ENCODE measurements at regions of chr12 and their contacts with region 1.

Region 1: DNA sequence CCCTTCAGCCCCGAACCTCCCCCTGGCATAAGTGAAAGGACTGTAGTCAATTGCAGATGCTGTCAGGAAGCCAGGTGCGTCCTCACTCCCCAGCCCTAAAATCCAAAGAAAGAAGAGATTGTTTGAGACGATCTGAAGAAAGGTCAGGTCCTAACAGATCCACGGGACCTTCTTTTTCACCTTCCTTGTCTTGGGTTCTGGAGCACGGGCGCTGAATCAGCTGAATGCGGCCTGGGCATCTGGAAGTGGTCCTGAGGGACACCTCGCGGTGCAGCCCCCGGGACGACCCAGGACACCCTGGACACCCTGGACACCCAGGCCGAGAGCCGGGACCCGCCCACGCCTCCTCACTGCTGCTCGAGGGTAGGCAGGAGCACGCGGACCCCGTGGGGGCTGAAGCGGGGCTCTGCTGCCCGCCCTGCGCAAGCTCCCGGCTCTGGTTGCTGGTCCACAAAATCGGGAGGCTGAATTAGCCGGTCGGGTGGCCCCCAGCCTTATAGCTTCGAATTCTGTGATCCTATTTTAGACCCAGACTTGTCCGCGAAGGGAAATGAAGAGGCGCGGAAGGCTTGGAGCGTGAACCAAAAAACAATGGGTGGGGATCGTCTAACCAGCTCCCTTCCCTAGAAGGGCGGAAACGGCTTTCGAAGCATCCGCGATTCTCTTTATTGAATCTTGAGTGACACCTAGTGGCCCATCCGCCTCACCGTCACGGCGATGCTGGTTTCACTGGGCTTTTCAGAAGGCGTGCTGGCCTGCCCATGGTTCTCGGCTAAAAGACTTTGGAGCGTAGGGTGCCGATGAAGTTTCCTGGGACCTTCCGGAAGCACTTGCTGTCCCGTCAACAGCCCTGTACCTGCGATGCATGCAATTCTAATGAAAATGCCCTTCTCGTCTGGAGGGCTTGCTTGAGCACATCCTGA is 46.4 kb upstream of the PLXNC1 start:
- DNase-seq: peak; percentile 96
- ATAC-seq: peak; percentile 33
- H3K4me3 ChIP-seq: peak overlapping the region; percentile 75
- H3K27ac ChIP-seq: peak overlapping the region; percentile 18; the same call in 1 of the 2 replicates
- H3K4me1 ChIP-seq: peaks cover 59% of the 10 kb centered on the region
- H3K27me3 ChIP-seq: no peaks in the 10 kb centered on the region
- CTCF ChIP-seq: peak; percentile 79

Region 2: DNA sequence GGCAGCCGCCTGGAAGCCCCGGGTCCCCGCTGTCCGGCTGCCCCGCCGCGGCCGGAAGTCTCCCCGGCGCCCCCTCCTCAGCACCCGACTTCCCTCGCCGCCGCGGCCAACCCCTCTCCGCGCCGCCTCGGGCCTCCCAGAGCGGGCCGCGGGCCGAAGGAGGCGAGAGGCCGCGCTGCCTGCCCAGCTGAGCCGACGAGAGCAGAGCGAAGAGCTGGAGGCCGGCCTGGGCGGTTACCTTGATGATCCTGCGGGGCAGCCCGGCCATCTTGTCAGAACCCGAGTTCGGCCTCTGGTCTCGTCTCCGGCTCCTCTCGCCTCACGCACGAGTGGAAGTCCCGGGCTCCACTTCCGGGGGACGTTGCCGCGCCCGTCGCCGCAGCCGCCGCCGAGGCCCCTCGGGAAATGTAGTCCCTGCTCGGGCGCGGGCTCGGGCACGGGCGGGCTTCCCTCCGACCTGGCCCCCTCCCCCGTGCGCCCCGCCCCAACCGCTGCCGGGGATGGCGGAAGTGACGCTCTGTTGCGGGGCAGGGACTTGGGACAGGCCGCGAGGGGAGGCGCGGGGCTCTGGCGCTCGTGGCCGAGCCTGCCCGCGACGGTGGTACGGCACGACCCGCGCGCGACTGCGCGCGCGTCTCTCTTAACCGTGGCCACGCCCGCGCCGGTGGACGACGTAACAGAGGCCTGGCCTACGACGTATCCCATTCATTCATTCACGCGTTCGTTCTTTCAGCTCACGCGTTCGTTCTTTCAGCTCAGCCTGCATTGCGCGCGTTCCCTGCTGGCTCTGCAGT is 660.2 kb before region 1 on chr12 and contains the start of gene UBE2N:
- CTCF ChIA-PET with region 1: no interaction called
- POLR2A ChIA-PET with region 1: no interaction called
- intact Hi-C with region 1: loop called (anchors 10 kb)
- DNase-seq: peak; percentile 94
- ATAC-seq: peak; percentile 85
- H3K4me3 ChIP-seq: peak within 1 kb of the TSS; percentile 86
- H3K27ac ChIP-seq: peak within 1 kb of the TSS; percentile 68
- H3K4me1 ChIP-seq: peaks cover 27% of the 10 kb centered on the region
- H3K27me3 ChIP-seq: no peaks in the 10 kb centered on the region
- CTCF ChIP-seq: no peak
- total RNA-seq, gene UBE2N: 128 and 205 TPM in 2 replicates

Region 3: DNA sequence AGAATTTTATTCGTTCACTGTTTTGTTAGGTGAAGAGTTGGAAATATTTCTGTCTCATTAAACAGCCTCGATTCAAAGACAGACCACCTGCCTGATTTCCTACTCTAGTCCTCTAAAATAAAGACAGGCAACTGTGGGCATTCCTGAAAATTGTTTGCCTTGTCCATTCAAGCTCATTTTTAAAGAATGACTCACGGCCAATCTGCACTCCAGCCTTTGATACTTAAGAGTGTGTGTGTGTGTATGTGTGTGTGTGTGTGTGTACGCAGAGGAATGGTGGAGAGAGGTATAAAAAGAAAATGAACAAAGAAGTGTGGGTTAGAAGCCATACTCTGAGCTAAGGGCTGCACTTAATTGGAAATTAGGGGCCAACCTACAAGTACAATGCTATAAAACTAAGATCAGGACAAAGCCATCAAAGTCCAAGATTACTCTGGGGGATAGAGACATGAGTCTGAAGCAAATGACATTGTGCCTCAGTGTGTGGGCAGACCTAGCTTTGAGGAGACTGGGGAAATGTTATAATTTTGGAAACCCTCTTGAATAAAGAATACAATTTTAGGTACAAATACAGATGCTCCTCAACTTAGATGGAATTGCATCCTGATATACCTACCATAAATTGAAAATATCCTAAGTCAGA is 575.1 kb before region 1 on chr12:
- CTCF ChIA-PET with region 1: no interaction called
- POLR2A ChIA-PET with region 1: interaction called, 11 read pairs
- intact Hi-C with region 1: no loop called
- DNase-seq: peak; percentile 95
- ATAC-seq: peak; percentile 92
- H3K4me3 ChIP-seq: no peak overlapping the region; the same call in 1 of the 2 replicates
- H3K27ac ChIP-seq: no peak overlapping the region
- H3K4me1 ChIP-seq: peaks cover 21% of the 10 kb centered on the region
- H3K27me3 ChIP-seq: no peaks in the 10 kb centered on the region
- CTCF ChIP-seq: no peak

Region 4: DNA sequence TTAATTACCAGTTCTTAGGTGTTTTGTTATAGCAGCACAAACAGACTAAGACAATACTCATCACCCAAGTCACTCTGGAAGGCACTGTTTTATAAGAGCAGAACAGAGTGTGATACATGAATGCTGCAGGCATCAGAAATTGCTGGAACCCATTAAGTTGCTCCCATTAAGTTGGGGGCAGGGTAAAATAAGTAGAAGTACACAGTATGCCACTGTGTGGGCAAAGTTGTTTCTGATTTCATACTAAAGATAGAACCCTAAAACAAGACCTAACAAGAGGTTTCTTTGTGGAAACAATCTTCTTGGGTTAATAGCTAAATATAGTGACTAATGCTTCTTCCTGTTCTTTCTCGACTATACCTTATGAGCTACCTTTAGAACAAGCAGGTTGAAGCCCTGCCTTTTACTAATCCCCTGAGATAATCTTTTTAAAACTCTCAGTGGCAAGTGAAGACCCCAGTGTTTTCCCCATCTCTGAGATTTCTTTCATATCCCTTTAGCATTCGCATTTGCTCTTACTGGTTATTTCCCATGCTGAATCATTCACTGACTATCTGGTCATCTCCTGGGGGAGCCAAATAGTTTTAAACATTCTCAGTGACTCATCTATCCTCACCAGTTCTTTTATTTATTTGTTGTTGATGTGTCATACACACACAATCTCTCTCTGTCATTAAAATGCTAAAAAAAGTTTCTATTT is 477.3 kb before region 1 on chr12:
- CTCF ChIA-PET with region 1: interaction called, 3 read pairs
- POLR2A ChIA-PET with region 1: no interaction called
- intact Hi-C with region 1: loop called (anchors 1 kb)
- DNase-seq: peak; percentile 95
- ATAC-seq: peak; percentile 85
- H3K4me3 ChIP-seq: peak overlapping the region; percentile 7; the same call in 1 of the 2 replicates
- H3K27ac ChIP-seq: peak overlapping the region; percentile 93
- H3K4me1 ChIP-seq: peaks cover 36% of the 10 kb centered on the region
- H3K27me3 ChIP-seq: no peaks in the 10 kb centered on the region
- CTCF ChIP-seq: no peak

Region 5: DNA sequence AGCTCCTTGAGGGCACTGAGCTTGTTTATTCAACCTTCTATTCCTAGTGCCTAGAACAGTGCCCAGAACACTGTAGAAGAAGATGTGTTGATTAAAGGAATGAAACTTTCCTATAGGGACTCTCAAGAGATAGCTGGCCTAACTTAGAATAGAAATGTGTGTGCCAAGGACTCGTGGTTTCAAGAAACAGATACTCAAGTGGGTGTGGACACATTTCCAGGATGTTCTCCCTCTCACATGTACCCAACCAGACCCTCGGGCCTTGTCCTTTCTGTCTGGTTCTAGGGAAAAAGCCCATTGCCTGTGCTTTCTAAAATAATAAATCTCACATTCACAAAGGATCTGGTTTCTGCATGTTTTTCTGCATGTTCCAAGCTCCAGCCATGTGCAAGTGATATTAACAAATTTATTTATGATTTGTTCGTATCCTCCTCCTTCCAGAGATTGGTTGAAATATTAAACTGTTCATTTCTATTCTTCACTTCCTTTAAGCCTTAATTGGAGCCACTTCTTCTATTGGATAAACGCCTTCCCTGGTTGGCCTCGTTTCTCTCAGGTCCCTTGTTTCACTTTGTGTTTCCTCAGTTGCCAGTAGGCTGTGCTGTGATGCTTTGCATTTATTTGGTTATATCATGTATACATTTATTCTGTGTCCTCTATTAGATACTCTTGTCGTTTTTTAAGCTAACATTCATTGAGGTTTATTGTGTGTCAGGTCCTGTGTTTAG is 335.0 kb before region 1 on chr12:
- CTCF ChIA-PET with region 1: interaction called, 91 read pairs
- POLR2A ChIA-PET with region 1: no interaction called
- intact Hi-C with region 1: loop called (anchors 1 kb)
- DNase-seq: peak; percentile 85
- ATAC-seq: peak; percentile 88
- H3K4me3 ChIP-seq: no peak overlapping the region
- H3K27ac ChIP-seq: no peak overlapping the region
- H3K4me1 ChIP-seq: peaks cover 15% of the 10 kb centered on the region; the same call in 1 of the 2 replicates
- H3K27me3 ChIP-seq: no peaks in the 10 kb centered on the region
- CTCF ChIP-seq: peak; percentile 93

Region 6: GRCh38 chr12:93908846-93909567 is 193.0 kb before region 1 on chr12:
- CTCF ChIA-PET with region 1: no interaction called
- POLR2A ChIA-PET with region 1: no interaction called
- intact Hi-C with region 1: loop called (anchors 5 kb)
- DNase-seq: peak; percentile 75
- ATAC-seq: peak; percentile 84
- H3K4me3 ChIP-seq: no peak overlapping the region
- H3K27ac ChIP-seq: no peak overlapping the region
- H3K4me1 ChIP-seq: peaks cover 16% of the 10 kb centered on the region; the same call in 1 of the 2 replicates
- H3K27me3 ChIP-seq: no peaks in the 10 kb centered on the region
- CTCF ChIP-seq: no peak